PC-3 (cell line): ENCODE measurements at regions of chr16 and their contacts with region 1.

Region 1: GRCh38 chr16:70638814-70639792 is 7.3 kb upstream of the IL34 start:
- DNase-seq: no peak
- ATAC-seq: no peak
- H3K4me3 ChIP-seq: no peak overlapping the region
- H3K27ac ChIP-seq: no peak overlapping the region
- H3K4me1 ChIP-seq: peaks cover 8% of the 10 kb centered on the region
- H3K27me3 ChIP-seq: no peaks in the 10 kb centered on the region
- CTCF ChIP-seq: 0 out of 2 replicates have a peak, but pooled peaks have one; percentile 12

Region 2: GRCh38 chr16:70553645-70554044 is 85.5 kb before region 1 on chr16:
- CTCF ChIA-PET with region 1: no interaction called
- POLR2A ChIA-PET with region 1: no interaction called
- intact Hi-C with region 1: no loop called
- DNase-seq: no peak
- ATAC-seq: peak; percentile 29
- H3K4me3 ChIP-seq: no peak overlapping the region
- H3K27ac ChIP-seq: no peak overlapping the region
- H3K4me1 ChIP-seq: no peaks in the 10 kb centered on the region
- H3K27me3 ChIP-seq: no peaks in the 10 kb centered on the region
- CTCF ChIP-seq: no peak

Region 3: DNA sequence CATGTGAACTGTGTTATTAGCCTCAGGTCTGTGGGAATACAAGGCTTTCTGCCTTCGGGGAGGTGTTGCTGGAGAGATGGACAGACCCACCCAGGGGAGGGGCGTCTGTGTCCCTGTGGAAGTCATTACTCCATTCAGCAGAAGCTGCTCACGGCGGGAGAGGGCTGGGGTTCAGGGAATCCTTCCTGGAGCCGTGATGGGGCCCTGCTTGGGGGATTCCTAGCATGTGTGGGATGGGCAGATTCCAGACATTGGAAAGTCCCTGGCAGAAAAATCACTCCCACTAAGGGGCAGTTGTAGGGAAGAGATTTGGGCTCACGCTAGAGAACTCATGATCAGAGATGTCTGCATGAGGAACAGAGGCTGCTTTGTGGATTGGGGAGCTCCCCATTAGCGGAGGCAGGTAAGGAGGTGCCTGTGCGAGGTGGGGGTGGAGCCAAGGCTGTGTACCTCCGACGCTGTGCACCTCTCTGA is 49.1 kb before region 1 on chr16:
- CTCF ChIA-PET with region 1: no interaction called
- POLR2A ChIA-PET with region 1: interaction called, 13 read pairs
- intact Hi-C with region 1: no loop called
- DNase-seq: no peak
- ATAC-seq: no peak
- H3K4me3 ChIP-seq: no peak overlapping the region
- H3K27ac ChIP-seq: no peak overlapping the region
- H3K4me1 ChIP-seq: 0 out of 2 replicates have a peak, but pooled peaks cover 3% of the 10 kb centered on the region
- H3K27me3 ChIP-seq: no peaks in the 10 kb centered on the region
- CTCF ChIP-seq: no peak

Region 4: DNA sequence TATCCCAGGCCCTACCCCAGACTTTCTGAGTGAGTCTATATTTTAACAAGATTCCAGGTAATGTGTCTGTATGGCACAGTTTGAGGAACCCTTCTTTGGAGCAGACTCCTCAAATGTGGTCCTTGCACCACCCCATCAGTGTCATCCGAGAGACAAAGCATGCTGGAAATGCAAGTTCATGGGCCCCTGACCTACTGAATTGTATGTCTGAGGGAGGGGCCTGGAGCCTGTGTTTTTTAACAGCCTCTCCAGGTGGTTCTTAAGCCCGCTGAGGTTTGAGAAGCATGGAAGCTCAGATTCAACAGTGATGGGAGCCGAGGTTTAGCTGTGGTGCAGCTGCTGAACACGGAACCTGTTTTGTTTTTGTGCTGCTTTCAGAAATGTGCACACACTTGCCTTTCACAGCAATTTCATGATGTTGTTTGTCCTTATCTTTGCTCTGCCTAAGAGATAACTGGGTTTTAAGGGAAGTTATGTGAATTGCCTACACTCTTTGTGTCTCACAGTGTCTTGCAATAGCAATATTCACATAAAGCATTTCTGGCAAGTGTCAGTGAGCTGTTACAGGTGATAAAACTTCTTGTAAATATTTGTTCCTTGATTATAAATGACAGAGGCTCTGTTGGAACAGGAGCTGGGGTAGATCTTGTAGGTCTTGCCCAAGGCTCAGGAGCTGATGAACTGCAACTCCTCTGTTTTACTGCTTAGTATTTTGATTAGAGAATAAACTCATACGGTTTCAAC is 24.7 kb before region 1 on chr16:
- CTCF ChIA-PET with region 1: no interaction called
- POLR2A ChIA-PET with region 1: no interaction called
- intact Hi-C with region 1: loop called (anchors 2 kb)
- DNase-seq: no peak
- ATAC-seq: peak; percentile 51
- H3K4me3 ChIP-seq: no peak overlapping the region
- H3K27ac ChIP-seq: no peak overlapping the region
- H3K4me1 ChIP-seq: no peaks in the 10 kb centered on the region
- H3K27me3 ChIP-seq: no peaks in the 10 kb centered on the region
- CTCF ChIP-seq: no peak

Region 5: DNA sequence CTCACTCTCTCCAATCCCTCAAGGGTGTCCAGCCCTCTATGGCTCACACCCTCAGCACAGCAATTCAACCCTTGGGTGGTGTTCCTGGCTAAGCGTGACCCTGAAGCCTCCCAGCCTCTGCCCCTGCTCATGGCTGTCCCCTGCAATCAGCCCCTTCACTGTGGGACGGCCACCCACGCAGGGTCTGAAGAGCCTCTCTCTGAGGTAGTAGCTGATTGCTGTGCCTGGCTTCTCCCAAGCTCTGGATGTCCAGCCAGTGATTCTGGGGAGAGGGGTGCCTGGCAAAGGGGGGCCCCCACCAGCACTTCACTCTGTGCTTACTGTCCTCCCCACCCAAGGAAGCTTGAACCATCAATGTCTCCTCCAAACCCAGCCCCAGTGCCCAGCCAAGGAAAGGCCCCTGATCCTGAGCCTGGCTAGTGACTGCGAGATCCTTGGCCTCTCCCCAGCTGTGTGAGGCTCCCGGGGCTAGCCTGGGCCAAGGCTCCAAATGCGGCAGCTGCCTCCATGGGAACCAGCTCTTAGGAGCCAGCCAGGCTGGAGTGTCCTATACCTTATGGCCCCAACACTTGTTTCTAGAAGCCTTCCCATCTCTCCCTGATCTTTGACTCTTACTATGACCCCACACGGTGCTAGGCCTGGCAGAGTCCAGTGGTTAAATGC is 36.9 kb after region 1 on chr16:
- CTCF ChIA-PET with region 1: no interaction called
- POLR2A ChIA-PET with region 1: interaction called, 12 read pairs
- intact Hi-C with region 1: no loop called
- DNase-seq: no peak
- ATAC-seq: no peak
- H3K4me3 ChIP-seq: no peak overlapping the region
- H3K27ac ChIP-seq: no peak overlapping the region
- H3K4me1 ChIP-seq: no peaks in the 10 kb centered on the region
- H3K27me3 ChIP-seq: no peaks in the 10 kb centered on the region
- CTCF ChIP-seq: no peak